ENCODE measurements at regions of chr16 and their contacts with region 1.

Region 1: GRCh38 chr16:20383106-20384029 is 21.2 kb downstream of the PDILT start:
- DNase-seq: peak; percentile 19
- H3K4me3 ChIP-seq: no peak overlapping the region
- H3K27ac ChIP-seq: no peak overlapping the region
- H3K4me1 ChIP-seq: peaks cover 3% of the 10 kb centered on the region
- H3K27me3 ChIP-seq: peaks cover 38% of the 10 kb centered on the region
- CTCF ChIP-seq: peak; percentile 85

Region 2: GRCh38 chr16:19907161-19907992 is 476.0 kb before region 1 on chr16:
- intact Hi-C with region 1: loop called (anchors 10 kb)
- DNase-seq: peak; percentile 51
- H3K4me3 ChIP-seq: no peak overlapping the region
- H3K27ac ChIP-seq: no peak overlapping the region
- H3K4me1 ChIP-seq: peaks cover 4% of the 10 kb centered on the region
- H3K27me3 ChIP-seq: peaks cover 38% of the 10 kb centered on the region
- CTCF ChIP-seq: peak; percentile 97

Region 3: GRCh38 chr16:20327444-20328041 is 55.8 kb before region 1 on chr16 and contains the start of gene GP2:
- intact Hi-C with region 1: no loop called
- DNase-seq: no peak
- H3K4me3 ChIP-seq: no peak within 1 kb of the TSS
- H3K27ac ChIP-seq: no peak within 1 kb of the TSS
- H3K4me1 ChIP-seq: no peaks in the 10 kb centered on the region
- H3K27me3 ChIP-seq: peaks cover 46% of the 10 kb centered on the region
- CTCF ChIP-seq: no peak
- total RNA-seq, gene GP2: not detected

Measured in left ventricle myocardium inferior (tissue), 1 donor.